PC-9 (cell line): ENCODE measurements at regions of chr12 and their contacts with region 1.

Region 1: DNA sequence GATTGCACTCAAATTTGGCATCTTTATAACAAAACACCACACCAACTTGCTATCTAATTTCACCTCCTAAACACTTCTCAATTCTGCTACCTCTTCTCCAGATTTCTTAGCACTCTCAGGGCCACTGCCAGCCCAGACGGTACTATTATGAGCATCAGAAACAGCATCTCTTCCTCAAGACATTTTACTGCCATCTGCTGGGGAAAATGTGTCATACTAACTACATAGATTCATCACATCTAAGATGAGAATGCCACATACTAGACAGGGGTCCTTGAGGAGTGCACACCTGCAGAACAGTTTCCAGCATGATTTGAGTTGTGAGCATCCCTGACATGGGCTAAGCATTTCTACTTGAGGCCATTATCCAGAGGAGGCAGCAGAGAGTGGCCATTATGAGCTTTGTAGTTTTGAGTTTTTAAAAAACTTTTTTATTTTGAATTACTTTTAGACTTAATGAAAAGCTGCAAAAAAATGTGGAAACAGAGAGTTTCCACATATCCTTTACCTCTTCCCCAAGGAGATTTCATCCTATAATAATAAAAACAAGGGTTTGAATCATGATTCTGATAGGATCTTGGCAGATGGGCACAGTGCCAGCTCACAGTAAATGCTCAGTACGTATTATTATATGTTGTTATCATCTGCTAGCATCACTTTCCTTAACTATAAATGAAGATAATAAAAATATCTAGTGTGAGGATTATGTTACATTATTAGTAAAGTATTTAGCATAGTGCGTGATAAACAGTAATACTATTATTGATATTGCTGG is 15.2 kb upstream of the GRIP1 start:
- DNase-seq: peak in 1 of 2 experiments; percentile 6
- H3K4me3 ChIP-seq: no peak overlapping the region
- H3K27ac ChIP-seq: no peak overlapping the region
- H3K4me1 ChIP-seq: no peaks in the 10 kb centered on the region
- H3K27me3 ChIP-seq: no peaks in the 10 kb centered on the region
- CTCF ChIP-seq: peak; percentile 73

Region 2: DNA sequence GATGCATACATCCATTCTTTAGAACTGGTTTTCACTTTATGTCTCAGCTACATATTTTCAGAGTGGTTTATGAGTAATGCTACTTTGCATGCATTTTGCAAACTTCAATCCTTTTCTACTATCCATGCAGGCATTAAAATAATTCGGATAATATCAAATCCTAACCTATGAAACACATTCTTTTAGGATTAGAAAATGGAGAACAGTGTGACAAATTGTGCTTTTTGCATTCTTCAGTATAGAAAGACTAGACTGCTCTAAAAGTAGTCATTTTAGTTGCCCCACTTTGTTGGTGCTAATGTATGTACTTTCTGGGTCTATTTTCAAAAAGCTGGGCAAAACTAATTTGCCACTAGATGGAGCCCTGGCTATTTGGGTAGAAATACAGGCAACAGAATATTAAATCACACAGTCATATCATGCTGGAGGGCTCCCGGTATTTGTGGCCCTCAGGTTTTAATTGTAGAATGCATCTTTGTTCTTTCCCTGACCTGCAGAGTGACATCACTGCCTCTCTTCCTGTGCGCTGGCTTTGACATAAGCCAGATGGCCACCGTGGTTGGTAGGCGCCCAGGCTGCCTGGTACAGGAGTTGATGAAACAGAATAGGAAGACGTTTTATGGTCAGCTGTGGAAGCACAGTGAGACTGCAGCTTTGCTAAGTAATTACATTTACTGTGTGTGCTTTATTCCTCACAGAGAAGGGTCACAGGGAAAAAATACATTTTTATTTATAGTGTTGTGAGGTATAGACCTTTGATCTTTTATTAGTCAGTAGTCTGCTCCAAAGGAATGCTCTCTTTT is 1387.5 kb before region 1 on chr12:
- CTCF ChIA-PET with region 1: no interaction called
- POLR2A ChIA-PET with region 1: no interaction called
- intact Hi-C with region 1: loop called (anchors 1 kb)
- DNase-seq: peak in 1 of 2 experiments; percentile 32
- H3K4me3 ChIP-seq: no peak overlapping the region
- H3K27ac ChIP-seq: no peak overlapping the region
- H3K4me1 ChIP-seq: no peaks in the 10 kb centered on the region
- H3K27me3 ChIP-seq: no peaks in the 10 kb centered on the region
- CTCF ChIP-seq: peak; percentile 76

Region 3: GRCh38 chr12:66144791-66145754 is 549.0 kb before region 1 on chr12:
- CTCF ChIA-PET with region 1: no interaction called
- POLR2A ChIA-PET with region 1: no interaction called
- intact Hi-C with region 1: loop called (anchors 1 kb)
- DNase-seq: peak; percentile 27 to 49
- H3K4me3 ChIP-seq: no peak overlapping the region
- H3K27ac ChIP-seq: no peak overlapping the region; the same call in 1 of the 2 replicates
- H3K4me1 ChIP-seq: peaks cover 5% of the 10 kb centered on the region; the same call in 1 of the 2 replicates
- H3K27me3 ChIP-seq: no peaks in the 10 kb centered on the region
- CTCF ChIP-seq: peak; percentile 75

Region 4: DNA sequence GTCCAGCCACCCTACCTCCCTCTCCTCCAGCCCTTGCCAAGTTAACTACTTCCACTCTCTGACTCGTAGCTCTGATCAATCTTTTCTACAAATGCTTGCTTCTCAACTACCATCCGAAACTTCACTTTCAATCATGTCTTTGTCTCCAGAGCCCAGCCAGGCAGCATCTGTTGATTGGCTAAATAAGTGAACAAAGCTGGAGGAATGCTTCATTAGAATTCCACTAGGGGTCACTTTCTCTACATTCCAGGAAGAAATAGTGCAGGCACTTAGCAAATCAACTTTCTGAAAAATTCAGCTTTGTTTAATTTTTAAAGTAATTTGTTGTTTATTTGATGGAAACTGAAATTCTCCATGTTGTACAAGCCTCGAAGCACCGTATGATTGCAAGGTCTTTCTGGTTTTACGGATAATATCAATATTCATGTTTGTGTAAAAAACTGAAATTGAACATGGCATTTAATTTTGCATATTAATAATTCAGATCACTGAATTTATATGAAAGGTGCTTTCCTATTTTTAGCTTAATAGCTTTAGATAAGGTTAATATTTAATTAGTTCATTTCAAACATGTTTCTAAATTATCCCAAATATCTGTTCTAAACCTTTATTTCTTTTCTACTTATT is 424.2 kb before region 1 on chr12:
- CTCF ChIA-PET with region 1: interaction called, 3 read pairs
- POLR2A ChIA-PET with region 1: no interaction called
- intact Hi-C with region 1: loop called (anchors 10 kb)
- DNase-seq: no peak
- H3K4me3 ChIP-seq: no peak overlapping the region
- H3K27ac ChIP-seq: no peak overlapping the region
- H3K4me1 ChIP-seq: no peaks in the 10 kb centered on the region
- H3K27me3 ChIP-seq: no peaks in the 10 kb centered on the region
- CTCF ChIP-seq: peak; percentile 71

Region 5: GRCh38 chr12:66352197-66352596 is 341.9 kb before region 1 on chr12:
- CTCF ChIA-PET with region 1: interaction called, 3 read pairs
- POLR2A ChIA-PET with region 1: interaction called, 3 read pairs
- intact Hi-C with region 1: loop called (anchors 5 kb)
- DNase-seq: peak in 1 of 2 experiments; percentile 18
- H3K4me3 ChIP-seq: no peak overlapping the region
- H3K27ac ChIP-seq: no peak overlapping the region
- H3K4me1 ChIP-seq: no peaks in the 10 kb centered on the region
- H3K27me3 ChIP-seq: no peaks in the 10 kb centered on the region
- CTCF ChIP-seq: peak; percentile 42; the same call in 1 of the 2 replicates

Region 6: GRCh38 chr12:66636771-66637170 is 57.3 kb before region 1 on chr12:
- CTCF ChIA-PET with region 1: no interaction called
- POLR2A ChIA-PET with region 1: no interaction called
- intact Hi-C with region 1: no loop called
- DNase-seq: no peak
- H3K4me3 ChIP-seq: no peak overlapping the region
- H3K27ac ChIP-seq: no peak overlapping the region
- H3K4me1 ChIP-seq: peaks cover 14% of the 10 kb centered on the region
- H3K27me3 ChIP-seq: no peaks in the 10 kb centered on the region
- CTCF ChIP-seq: no peak

Region 7: DNA sequence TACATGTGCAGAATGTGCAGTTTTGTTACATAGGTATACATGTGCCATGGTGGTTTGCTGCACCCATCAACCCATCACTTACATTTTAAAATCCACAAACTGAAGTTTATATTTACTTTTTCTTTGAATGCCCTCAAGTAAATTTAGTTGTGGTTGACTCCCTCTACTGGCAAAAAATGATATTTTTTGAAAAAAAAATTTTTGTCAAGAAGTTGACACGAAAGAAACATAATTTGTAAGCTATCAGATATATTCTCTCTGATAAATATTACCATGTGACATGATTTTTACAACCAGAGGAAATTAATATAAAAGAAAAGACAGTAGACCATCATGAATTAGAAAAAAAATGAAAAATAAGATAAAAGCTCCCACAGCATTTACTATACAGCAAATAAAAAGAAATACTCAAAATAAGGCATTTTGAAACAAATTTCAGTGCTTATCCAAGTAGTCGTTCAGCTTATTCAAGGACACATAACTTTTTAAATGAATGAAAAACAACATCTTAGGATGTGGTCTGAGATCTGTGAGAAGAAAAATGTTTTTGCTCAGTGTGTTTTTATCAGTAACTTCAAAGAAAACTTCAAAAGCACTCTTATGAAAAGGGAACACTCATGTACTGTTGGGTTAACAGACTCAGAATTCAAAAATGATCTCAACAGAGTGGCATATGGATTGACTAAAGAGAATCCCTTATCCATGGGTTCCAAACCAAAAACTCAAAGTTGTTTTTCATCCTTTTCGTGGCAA is 14.8 kb after region 1 on chr12:
- CTCF ChIA-PET with region 1: no interaction called
- POLR2A ChIA-PET with region 1: no interaction called
- intact Hi-C with region 1: no loop called
- DNase-seq: no peak
- H3K4me3 ChIP-seq: no peak overlapping the region
- H3K27ac ChIP-seq: no peak overlapping the region
- H3K4me1 ChIP-seq: no peaks in the 10 kb centered on the region
- H3K27me3 ChIP-seq: no peaks in the 10 kb centered on the region
- CTCF ChIP-seq: peak; percentile 73

Region 8: GRCh38 chr12:66860752-66861750 is 167.0 kb after region 1 on chr12:
- CTCF ChIA-PET with region 1: no interaction called
- POLR2A ChIA-PET with region 1: no interaction called
- intact Hi-C with region 1: loop called (anchors 5 kb)
- DNase-seq: peak; percentile 44 to 59
- H3K4me3 ChIP-seq: no peak overlapping the region
- H3K27ac ChIP-seq: no peak overlapping the region
- H3K4me1 ChIP-seq: peaks cover 17% of the 10 kb centered on the region
- H3K27me3 ChIP-seq: no peaks in the 10 kb centered on the region
- CTCF ChIP-seq: peak; percentile 94